IMR-90 (cell line): ENCODE measurements at regions of chr11 and their contacts with region 1.

Region 1: DNA sequence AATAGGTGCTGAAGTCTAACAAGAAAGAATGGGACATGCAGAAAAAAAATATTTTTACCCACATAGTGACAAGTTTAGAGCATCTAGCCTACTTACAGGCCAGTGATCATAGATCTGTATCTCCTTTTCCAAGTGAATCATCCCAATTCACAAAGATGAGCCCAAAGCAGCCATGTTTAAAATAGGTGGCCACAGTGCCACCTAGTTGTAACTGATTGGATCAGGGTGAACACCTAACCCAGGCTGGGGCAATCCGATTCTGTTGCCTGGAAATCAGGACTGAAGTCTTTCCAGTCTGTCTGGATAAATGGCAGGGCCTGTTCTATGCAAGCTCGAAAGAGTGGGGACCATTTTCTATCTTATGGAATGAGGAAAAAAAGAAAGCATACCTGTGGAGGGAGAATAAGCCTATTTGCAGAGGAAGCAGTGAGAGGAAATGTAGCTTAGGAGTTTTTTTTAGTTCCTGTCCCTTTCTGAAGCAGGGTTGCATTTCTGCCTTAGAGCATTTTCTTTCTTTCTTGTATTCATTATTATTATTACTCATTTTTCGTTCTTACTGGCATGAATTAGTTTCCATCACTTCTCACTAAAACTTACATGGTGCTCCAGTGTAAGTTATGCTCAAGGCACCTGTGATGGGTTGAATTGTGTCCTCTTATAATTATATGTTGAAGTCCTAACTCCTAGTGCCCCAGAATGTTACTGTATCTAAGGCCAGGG is 113.2 kb upstream of the RAG2 start:
- DNase-seq: no peak
- ATAC-seq: no peak
- H3K4me3 ChIP-seq: no peak overlapping the region
- H3K27ac ChIP-seq: no peak overlapping the region
- H3K4me1 ChIP-seq: no peaks in the 10 kb centered on the region
- H3K27me3 ChIP-seq: no peaks in the 10 kb centered on the region; the same call in 1 of the 2 replicates
- CTCF ChIP-seq: no peak
- POLR2A ChIP-seq: no peak
- RAD21 ChIP-seq: no peak

Region 2: GRCh38 chr11:35232891-35233330 is 1478.4 kb before region 1 on chr11:
- CTCF ChIA-PET with region 1: no interaction called
- POLR2A ChIA-PET with region 1: interaction called, 14 read pairs
- dilution Hi-C with region 1: no loop called
- in situ Hi-C with region 1: no loop called
- intact Hi-C with region 1: no loop called
- DNase-seq: peak; percentile 83
- ATAC-seq: peak; percentile 62
- H3K4me3 ChIP-seq: no peak overlapping the region
- H3K27ac ChIP-seq: peak overlapping the region; percentile 86
- H3K4me1 ChIP-seq: peaks cover 16% of the 10 kb centered on the region
- H3K27me3 ChIP-seq: no peaks in the 10 kb centered on the region
- CTCF ChIP-seq: no peak
- POLR2A ChIP-seq: no peak
- RAD21 ChIP-seq: no peak